ENCODE measurements at regions of chr1 and their contacts with region 1.

Region 1: DNA sequence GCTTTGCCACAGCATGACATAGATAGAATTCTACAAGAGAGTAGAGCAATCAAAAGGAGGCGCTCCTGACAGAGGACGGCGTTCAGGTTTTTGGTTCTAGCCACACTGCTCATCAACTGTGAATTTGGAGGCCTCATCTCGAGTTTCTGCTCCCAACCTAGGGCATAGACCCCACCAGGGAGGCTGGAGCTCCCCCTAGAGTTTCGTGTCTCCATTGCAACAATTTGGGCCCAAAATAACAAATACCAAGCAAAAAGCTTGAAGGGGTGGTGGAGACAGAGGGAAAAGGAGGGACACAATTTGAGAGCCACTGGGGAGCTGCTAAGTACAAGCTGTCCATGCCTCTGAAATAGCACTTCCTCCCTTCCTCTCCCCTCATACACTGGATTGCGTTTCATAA is 297.0 kb downstream of the GPATCH2 start:
- DNase-seq: no peak
- H3K4me3 ChIP-seq: no peak overlapping the region
- H3K27ac ChIP-seq: no peak overlapping the region
- H3K4me1 ChIP-seq: peaks cover 0 to 27% (median 21%) of the 10 kb centered on the region in 4 donors
- H3K27me3 ChIP-seq: no peaks in the 10 kb centered on the region
- CTCF ChIP-seq: peak; percentile 44 to 65 (median 50)
- EP300 ChIP-seq: no peak
- POLR2A ChIP-seq: no peak

Region 2: GRCh38 chr1:216750012-216750627 is 583.8 kb before region 1 on chr1:
- intact Hi-C with region 1: loop called (anchors 5 kb)
- DNase-seq: no peak
- H3K4me3 ChIP-seq: no peak overlapping the region
- H3K27ac ChIP-seq: peak overlapping the region in 3 of 4 donors; percentile 16 to 26 (median 18)
- H3K4me1 ChIP-seq: peaks cover 5 to 25% (median 24%) of the 10 kb centered on the region in 4 donors
- H3K27me3 ChIP-seq: no peaks in the 10 kb centered on the region
- CTCF ChIP-seq: peak; percentile 69 to 83 (median 77)
- EP300 ChIP-seq: no peak
- POLR2A ChIP-seq: no peak

Measured in esophagus muscularis mucosa (tissue), 4 donors.